Activated CD4-positive, alpha-beta T cell treated with anti-CD3 and anti-CD28 coated beads, Interleukin-2, amount 10 ng/mL, durations not matched to agents 7 days and 5 days (primary cell): ENCODE measurements at regions of chr4 and their contacts with region 1.

Region 1: DNA sequence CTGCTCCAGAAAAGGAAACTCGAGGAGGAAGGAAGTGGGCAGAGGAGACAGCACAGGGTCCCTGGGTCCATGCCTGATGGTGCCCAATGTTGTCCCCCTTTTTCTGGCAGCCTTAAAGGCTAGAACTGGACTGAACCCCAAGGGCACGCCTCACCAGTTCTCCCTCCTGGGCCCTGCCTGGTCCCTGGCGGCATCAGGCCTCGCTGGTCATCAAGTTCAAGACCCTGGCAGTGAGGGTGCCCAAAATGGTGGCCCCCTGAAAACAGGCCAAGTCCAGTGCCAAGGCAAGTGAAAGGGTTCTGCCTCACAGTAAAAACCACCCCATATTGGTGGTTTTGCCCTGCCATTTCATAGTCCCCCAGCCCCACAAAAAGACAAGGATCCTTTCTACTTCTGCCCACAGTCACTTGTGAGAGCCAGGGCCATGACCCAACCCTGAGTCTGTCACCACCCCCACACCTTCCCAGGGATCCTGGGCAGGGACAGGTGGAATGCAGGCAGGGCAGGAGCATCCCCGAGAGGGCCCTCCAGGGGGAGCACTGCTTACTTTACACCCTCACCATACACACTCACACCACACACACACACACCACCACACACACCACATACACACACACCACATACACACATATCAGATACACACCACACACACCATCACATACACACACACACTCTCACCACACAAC is 107.6 kb downstream of the DCTD start:
- DNase-seq: peak; percentile 10
- H3K4me3 Mint-ChIP-seq: no peak overlapping the region
- H3K27ac Mint-ChIP-seq: no peak overlapping the region
- H3K4me1 Mint-ChIP-seq: peaks cover 13% of the 10 kb centered on the region
- H3K27me3 Mint-ChIP-seq: peaks cover 3% of the 10 kb centered on the region

Region 2: DNA sequence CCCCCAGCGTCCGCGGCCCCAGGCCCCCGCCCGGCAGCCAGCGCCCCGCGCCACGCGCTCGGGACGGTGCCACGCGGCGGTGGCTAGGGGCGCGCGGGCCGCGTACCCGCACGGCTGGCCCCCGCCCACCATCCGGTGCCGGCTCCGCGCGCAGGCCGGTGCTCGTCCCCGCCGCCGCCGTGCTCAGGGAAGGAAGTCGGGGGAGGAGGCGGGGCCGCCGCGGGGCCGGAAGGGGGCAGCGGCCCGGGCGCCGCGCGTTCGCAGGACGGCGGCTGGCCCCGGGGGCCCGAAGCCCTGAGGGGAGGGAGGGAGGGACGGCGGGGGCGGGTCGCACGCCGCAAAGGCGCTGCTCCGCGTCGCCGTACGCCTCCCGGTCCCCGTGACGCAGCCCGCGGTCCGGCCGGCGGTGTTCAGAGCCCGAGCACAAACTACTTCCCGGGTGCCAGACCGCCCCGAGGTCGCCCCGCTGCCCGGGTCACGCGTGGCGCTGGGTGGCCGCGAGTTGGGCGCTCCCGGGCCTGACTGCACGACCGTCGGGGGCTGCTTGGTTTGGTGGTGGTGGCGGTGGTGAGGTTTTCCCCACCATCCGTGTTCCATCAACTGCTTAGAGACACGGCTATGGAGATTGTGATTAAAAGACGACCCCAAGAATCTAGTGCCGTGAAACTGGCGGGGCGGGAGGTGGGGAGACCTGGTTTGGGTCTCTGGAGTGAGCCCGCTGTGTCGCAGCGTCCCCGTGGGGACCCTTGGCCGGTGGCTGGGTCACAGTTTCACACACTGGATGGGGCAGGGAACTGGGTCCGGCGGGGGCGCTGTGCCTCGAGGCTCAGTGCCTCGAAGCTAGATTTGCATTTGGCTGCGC is 107.9 kb after region 1 on chr4 and contains the start of gene DCTD:
- CTCF ChIA-PET with region 1: no interaction called
- POLR2A ChIA-PET with region 1: interaction called, 12 read pairs
- DNase-seq: peak; percentile 80
- H3K4me3 Mint-ChIP-seq: peak within 1 kb of the TSS; percentile 84
- H3K27ac Mint-ChIP-seq: peak within 1 kb of the TSS; percentile 98
- H3K4me1 Mint-ChIP-seq: peaks cover 53% of the 10 kb centered on the region
- H3K27me3 Mint-ChIP-seq: peaks cover 1% of the 10 kb centered on the region
- total RNA-seq, gene DCTD: 60.0 to 65.9 TPM